ENCODE measurements at regions of chr2 and their contacts with region 1.

Region 1: GRCh38 chr2:201231781-201232466 is 28.4 kb upstream of the CASP8 start:
- DNase-seq: peak; percentile 70 to 89
- H3K4me3 ChIP-seq: no peak overlapping the region
- H3K27ac ChIP-seq: no peak overlapping the region
- H3K4me1 ChIP-seq: no peaks in the 10 kb centered on the region; a peak in 1 of 7 replicates
- H3K27me3 ChIP-seq: no peaks in the 10 kb centered on the region; a peak in 2 of 7 replicates
- CTCF ChIP-seq: peak; percentile 81 to 97 (median 89)
- EP300 ChIP-seq: no peak
- POLR2A ChIP-seq: peak in 1 of 2 experiments; percentile 38; a peak in 1 of 3 replicates
- RAD21 ChIP-seq: peak; percentile 90 to 96

Region 2: GRCh38 chr2:200975672-200976071 is 256.3 kb before region 1 on chr2:
- CTCF ChIA-PET with region 1: no interaction called
- POLR2A ChIA-PET with region 1: no interaction called
- DNase-seq: no peak
- H3K4me3 ChIP-seq: no peak overlapping the region
- H3K27ac ChIP-seq: no peak overlapping the region
- H3K4me1 ChIP-seq: no peaks in the 10 kb centered on the region
- H3K27me3 ChIP-seq: no peaks in the 10 kb centered on the region
- CTCF ChIP-seq: no peak
- EP300 ChIP-seq: no peak
- POLR2A ChIP-seq: no peak
- RAD21 ChIP-seq: no peak

Region 3: GRCh38 chr2:200985799-200986198 is 246.1 kb before region 1 on chr2:
- CTCF ChIA-PET with region 1: no interaction called
- POLR2A ChIA-PET with region 1: no interaction called
- DNase-seq: no peak
- H3K4me3 ChIP-seq: no peak overlapping the region
- H3K27ac ChIP-seq: no peak overlapping the region
- H3K4me1 ChIP-seq: peaks cover 0 to 6% (median 0%) of the 10 kb centered on the region in 4 experiments; a peak in 4 of 7 replicates
- H3K27me3 ChIP-seq: no peaks in the 10 kb centered on the region
- CTCF ChIP-seq: no peak
- EP300 ChIP-seq: no peak
- POLR2A ChIP-seq: no peak
- RAD21 ChIP-seq: no peak

Region 4: GRCh38 chr2:201182650-201183364 is 49.1 kb before region 1 on chr2 and contains the start of gene CASP10:
- CTCF ChIA-PET with region 1: interaction called, 42 read pairs
- POLR2A ChIA-PET with region 1: interaction called, 8 read pairs
- DNase-seq: no peak
- H3K4me3 ChIP-seq: peak within 1 kb of the TSS in 3 of 4 experiments; percentile 5 to 47 (median 17); a peak in 4 of 8 replicates
- H3K27ac ChIP-seq: peak within 1 kb of the TSS; percentile 46; the same call in 1 of the 2 replicates
- H3K4me1 ChIP-seq: no peaks in the 10 kb centered on the region
- H3K27me3 ChIP-seq: no peaks in the 10 kb centered on the region
- CTCF ChIP-seq: peak in 2 of 3 experiments; percentile 43 to 60; a peak in 3 of 4 replicates
- EP300 ChIP-seq: no peak
- POLR2A ChIP-seq: peak in 1 of 2 experiments; percentile 58; a peak in 1 of 3 replicates
- RAD21 ChIP-seq: peak; percentile 63 to 71
- total RNA-seq, gene CASP10: 4.0 and 4.2 TPM in 2 replicates

Region 5: GRCh38 chr2:201208563-201209252 is 23.2 kb before region 1 on chr2:
- CTCF ChIA-PET with region 1: interaction called, 21 read pairs
- POLR2A ChIA-PET with region 1: interaction called, 3 read pairs
- DNase-seq: no peak
- H3K4me3 ChIP-seq: no peak overlapping the region
- H3K27ac ChIP-seq: no peak overlapping the region
- H3K4me1 ChIP-seq: peaks cover 0 to 2% (median under 1%) of the 10 kb centered on the region in 4 experiments; a peak in 1 of 7 replicates
- H3K27me3 ChIP-seq: no peaks in the 10 kb centered on the region
- CTCF ChIP-seq: no peak
- EP300 ChIP-seq: no peak
- POLR2A ChIP-seq: no peak
- RAD21 ChIP-seq: no peak

Region 6: GRCh38 chr2:201275990-201276389 is 44.1 kb after region 1 on chr2:
- CTCF ChIA-PET with region 1: interaction called, 16 read pairs
- POLR2A ChIA-PET with region 1: no interaction called
- DNase-seq: peak in 1 of 2 experiments; percentile 60
- H3K4me3 ChIP-seq: no peak overlapping the region
- H3K27ac ChIP-seq: no peak overlapping the region
- H3K4me1 ChIP-seq: no peaks in the 10 kb centered on the region
- H3K27me3 ChIP-seq: no peaks in the 10 kb centered on the region
- CTCF ChIP-seq: peak; percentile 35 to 97 (median 93)
- EP300 ChIP-seq: no peak
- POLR2A ChIP-seq: no peak
- RAD21 ChIP-seq: peak; percentile 64 to 74

Region 7: GRCh38 chr2:201754717-201755415 is 522.9 kb after region 1 on chr2:
- CTCF ChIA-PET with region 1: no interaction called
- POLR2A ChIA-PET with region 1: no interaction called
- DNase-seq: no peak
- H3K4me3 ChIP-seq: no peak overlapping the region
- H3K27ac ChIP-seq: no peak overlapping the region
- H3K4me1 ChIP-seq: no peaks in the 10 kb centered on the region
- H3K27me3 ChIP-seq: no peaks in the 10 kb centered on the region
- CTCF ChIP-seq: no peak
- EP300 ChIP-seq: no peak
- POLR2A ChIP-seq: no peak
- RAD21 ChIP-seq: no peak

Measured in H1 (cell line).